Activated naive CD8-positive, alpha-beta T cell treated with anti-CD3 and anti-CD28 coated beads, Interleukin-2, amount 10 ng/mL, durations not matched to agents 7 days and 5 days (primary cell): ENCODE measurements at regions of chr19 and their contacts with region 1.

Region 1: GRCh38 chr19:2018752-2019151 is 3.2 kb upstream of the BTBD2 start:
- DNase-seq: no peak
- ATAC-seq: no peak
- H3K4me3 Mint-ChIP-seq: no peak overlapping the region
- H3K27ac Mint-ChIP-seq: no peak overlapping the region
- H3K4me1 Mint-ChIP-seq: peaks cover 12% of the 10 kb centered on the region
- H3K27me3 Mint-ChIP-seq: no peaks in the 10 kb centered on the region

Region 2: GRCh38 chr19:2032296-2032941 is 13.7 kb after region 1 on chr19:
- POLR2A ChIA-PET with region 1: interaction called, 10 read pairs
- DNase-seq: no peak
- ATAC-seq: peak; percentile 51
- H3K4me3 Mint-ChIP-seq: peak overlapping the region; percentile 66
- H3K27ac Mint-ChIP-seq: peak overlapping the region; percentile 82
- H3K4me1 Mint-ChIP-seq: peaks cover 22% of the 10 kb centered on the region
- H3K27me3 Mint-ChIP-seq: no peaks in the 10 kb centered on the region